ENCODE measurements at regions of chr4 and their contacts with region 1.

Region 1: GRCh38 chr4:110087070-110087708 is 111.2 kb downstream of the ELOVL6 start:
- DNase-seq: no peak
- H3K4me3 Mint-ChIP-seq: no peak overlapping the region
- H3K27ac Mint-ChIP-seq: peak overlapping the region; percentile 38
- H3K4me1 Mint-ChIP-seq: peaks cover 72% of the 10 kb centered on the region
- H3K27me3 Mint-ChIP-seq: no peaks in the 10 kb centered on the region

Region 2: GRCh38 chr4:109648266-109648996 is 438.8 kb before region 1 on chr4:
- intact Hi-C with region 1: loop called (anchors 5 kb)
- DNase-seq: no peak
- H3K4me3 Mint-ChIP-seq: peak overlapping the region; percentile 69
- H3K27ac Mint-ChIP-seq: peak overlapping the region; percentile 84
- H3K4me1 Mint-ChIP-seq: peaks cover 8% of the 10 kb centered on the region
- H3K27me3 Mint-ChIP-seq: no peaks in the 10 kb centered on the region

Region 3: DNA sequence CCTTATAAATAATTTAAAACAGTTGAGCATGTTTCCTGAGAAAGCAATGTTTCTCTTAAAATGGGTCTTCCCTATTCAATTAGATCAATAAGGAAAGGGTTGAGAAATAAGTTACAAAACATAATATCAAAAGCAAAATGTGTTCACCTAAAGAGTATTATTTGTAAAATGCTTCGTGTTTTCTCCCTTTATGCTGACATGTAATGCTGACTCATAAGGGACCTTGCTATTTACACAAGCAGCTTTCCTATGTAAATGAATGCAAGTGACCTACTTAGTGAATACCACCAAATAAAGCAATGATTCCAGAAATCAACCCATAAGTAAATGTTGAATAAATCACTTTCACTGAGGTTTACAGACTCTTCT is 19.7 kb after region 1 on chr4:
- intact Hi-C with region 1: loop called (anchors 2 kb)
- DNase-seq: no peak
- H3K4me3 Mint-ChIP-seq: no peak overlapping the region
- H3K27ac Mint-ChIP-seq: no peak overlapping the region
- H3K4me1 Mint-ChIP-seq: peaks cover 18% of the 10 kb centered on the region
- H3K27me3 Mint-ChIP-seq: no peaks in the 10 kb centered on the region

Region 4: GRCh38 chr4:110124711-110125110 is 37.5 kb after region 1 on chr4:
- intact Hi-C with region 1: loop called (anchors 5 kb)
- DNase-seq: no peak
- H3K4me3 Mint-ChIP-seq: no peak overlapping the region
- H3K27ac Mint-ChIP-seq: no peak overlapping the region
- H3K4me1 Mint-ChIP-seq: peaks cover 31% of the 10 kb centered on the region
- H3K27me3 Mint-ChIP-seq: no peaks in the 10 kb centered on the region

Region 5: GRCh38 chr4:110287130-110287529 is 199.9 kb after region 1 on chr4:
- intact Hi-C with region 1: loop called (anchors 1 kb)
- DNase-seq: no peak
- H3K4me3 Mint-ChIP-seq: peak overlapping the region; percentile 31
- H3K27ac Mint-ChIP-seq: peak overlapping the region; percentile 74
- H3K4me1 Mint-ChIP-seq: peaks cover 15% of the 10 kb centered on the region
- H3K27me3 Mint-ChIP-seq: peaks cover 13% of the 10 kb centered on the region

Region 6: GRCh38 chr4:110998320-110998719 is 911.1 kb after region 1 on chr4:
- intact Hi-C with region 1: no loop called
- DNase-seq: no peak
- H3K4me3 Mint-ChIP-seq: no peak overlapping the region
- H3K27ac Mint-ChIP-seq: no peak overlapping the region
- H3K4me1 Mint-ChIP-seq: no peaks in the 10 kb centered on the region
- H3K27me3 Mint-ChIP-seq: no peaks in the 10 kb centered on the region

Measured in activated T-helper 1 cell treated with anti-CD3 and anti-CD28 coated beads, Interleukin-12 subunit alpha, Interleukin-12 subunit beta, Interleukin-2, Interleukin-4 antibody, amounts not matched to agents 30 ng/mL and 10 ng/mL and 1 ng/mL, durations not matched to agents 14 hours and 24 hours and 36 hours (primary cell).